Transverse colon (tissue), 4 donors: ENCODE measurements at regions of chr13 and their contacts with region 1.

Region 1: DNA sequence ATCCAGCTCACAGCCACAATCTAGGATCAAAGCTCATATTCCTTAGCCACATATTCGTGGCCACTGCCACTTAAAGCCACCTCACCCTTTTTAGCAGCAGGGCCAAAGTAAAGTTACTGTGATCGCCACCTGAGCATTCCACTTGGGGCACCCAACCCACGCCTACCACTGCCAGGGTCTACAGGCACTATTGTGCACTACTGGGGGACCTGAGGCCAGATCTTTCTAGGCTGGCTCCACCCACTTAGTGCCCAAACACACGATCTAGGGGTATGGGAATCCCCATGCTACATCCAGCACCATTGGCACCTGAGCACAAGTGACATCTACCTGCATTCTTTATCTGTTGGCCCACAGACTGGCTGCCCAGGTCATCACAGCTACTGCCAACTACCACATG is 517.9 kb upstream of the PRR20A start:
- DNase-seq: no peak
- H3K4me3 ChIP-seq: no peak overlapping the region
- H3K27ac ChIP-seq: no peak overlapping the region
- H3K4me1 ChIP-seq: no peaks in the 10 kb centered on the region
- H3K27me3 ChIP-seq: no peaks in the 10 kb centered on the region
- CTCF ChIP-seq: no peak
- EP300 ChIP-seq: no peak
- POLR2A ChIP-seq: no peak

Region 2: DNA sequence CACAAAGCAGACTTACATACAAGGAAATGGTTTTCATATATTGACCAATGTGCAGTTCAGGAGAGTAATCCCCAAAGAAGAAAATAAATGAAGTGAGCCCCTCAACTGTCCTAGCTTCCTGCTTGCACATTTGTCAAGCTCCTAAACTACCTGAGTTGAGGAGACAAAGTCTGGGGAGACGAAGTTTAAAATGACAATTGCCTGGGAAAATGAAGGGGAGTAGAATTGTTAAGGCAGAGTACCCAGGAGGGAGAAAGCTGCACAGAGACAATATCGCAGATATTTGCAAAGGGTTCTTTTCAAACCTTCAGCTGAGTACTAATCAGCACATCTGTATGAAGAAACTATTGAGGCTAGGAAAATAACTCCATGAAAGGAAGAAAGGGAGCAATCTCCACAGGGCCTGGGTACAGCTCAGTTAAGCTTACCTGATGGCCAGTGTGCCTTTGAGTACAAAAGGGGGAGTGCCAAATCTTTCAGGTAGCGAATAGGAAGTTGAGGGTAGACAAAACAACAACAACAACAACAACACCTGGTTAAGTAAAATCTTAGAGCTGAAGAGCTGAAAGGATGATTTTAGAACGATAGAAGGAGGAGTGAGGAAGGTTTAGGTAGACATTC is 1182.3 kb before region 1 on chr13:
- in situ Hi-C with region 1: no loop called
- intact Hi-C with region 1: loop called (anchors 5 kb)
- DNase-seq: no peak
- H3K4me3 ChIP-seq: no peak overlapping the region
- H3K27ac ChIP-seq: no peak overlapping the region
- H3K4me1 ChIP-seq: no peaks in the 10 kb centered on the region
- H3K27me3 ChIP-seq: no peaks in the 10 kb centered on the region
- CTCF ChIP-seq: no peak
- EP300 ChIP-seq: no peak
- POLR2A ChIP-seq: no peak

Region 3: GRCh38 chr13:56687131-56687530 is 64.3 kb after region 1 on chr13:
- in situ Hi-C with region 1: no loop called
- intact Hi-C with region 1: no loop called
- DNase-seq: no peak
- H3K4me3 ChIP-seq: no peak overlapping the region
- H3K27ac ChIP-seq: no peak overlapping the region
- H3K4me1 ChIP-seq: no peaks in the 10 kb centered on the region
- H3K27me3 ChIP-seq: no peaks in the 10 kb centered on the region
- CTCF ChIP-seq: no peak
- EP300 ChIP-seq: no peak
- POLR2A ChIP-seq: no peak

Region 4: DNA sequence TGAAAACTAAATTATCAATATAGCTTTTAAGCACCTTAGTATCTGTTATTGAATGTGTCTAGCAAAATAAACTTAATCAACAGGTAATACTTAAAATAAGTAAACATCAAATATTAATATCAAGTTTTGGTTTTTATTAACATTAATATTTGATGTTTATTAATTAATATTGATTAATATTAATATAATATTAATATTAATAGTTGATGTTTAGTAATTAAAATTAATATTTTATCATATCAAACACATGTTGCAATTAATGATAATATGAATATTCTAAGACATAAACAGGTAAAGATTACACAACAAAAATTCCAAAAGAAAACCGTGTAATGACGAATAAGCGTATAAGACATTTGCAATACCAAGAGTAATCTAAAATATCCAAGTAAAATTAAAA is 295.1 kb after region 1 on chr13:
- in situ Hi-C with region 1: no loop called
- intact Hi-C with region 1: no loop called
- DNase-seq: no peak
- H3K4me3 ChIP-seq: no peak overlapping the region
- H3K27ac ChIP-seq: no peak overlapping the region
- H3K4me1 ChIP-seq: no peaks in the 10 kb centered on the region
- H3K27me3 ChIP-seq: no peaks in the 10 kb centered on the region
- CTCF ChIP-seq: no peak
- EP300 ChIP-seq: no peak
- POLR2A ChIP-seq: no peak